Endothelial cell of umbilical vein (primary cell): ENCODE measurements at regions of chr12 and their contacts with region 1.

Region 1: DNA sequence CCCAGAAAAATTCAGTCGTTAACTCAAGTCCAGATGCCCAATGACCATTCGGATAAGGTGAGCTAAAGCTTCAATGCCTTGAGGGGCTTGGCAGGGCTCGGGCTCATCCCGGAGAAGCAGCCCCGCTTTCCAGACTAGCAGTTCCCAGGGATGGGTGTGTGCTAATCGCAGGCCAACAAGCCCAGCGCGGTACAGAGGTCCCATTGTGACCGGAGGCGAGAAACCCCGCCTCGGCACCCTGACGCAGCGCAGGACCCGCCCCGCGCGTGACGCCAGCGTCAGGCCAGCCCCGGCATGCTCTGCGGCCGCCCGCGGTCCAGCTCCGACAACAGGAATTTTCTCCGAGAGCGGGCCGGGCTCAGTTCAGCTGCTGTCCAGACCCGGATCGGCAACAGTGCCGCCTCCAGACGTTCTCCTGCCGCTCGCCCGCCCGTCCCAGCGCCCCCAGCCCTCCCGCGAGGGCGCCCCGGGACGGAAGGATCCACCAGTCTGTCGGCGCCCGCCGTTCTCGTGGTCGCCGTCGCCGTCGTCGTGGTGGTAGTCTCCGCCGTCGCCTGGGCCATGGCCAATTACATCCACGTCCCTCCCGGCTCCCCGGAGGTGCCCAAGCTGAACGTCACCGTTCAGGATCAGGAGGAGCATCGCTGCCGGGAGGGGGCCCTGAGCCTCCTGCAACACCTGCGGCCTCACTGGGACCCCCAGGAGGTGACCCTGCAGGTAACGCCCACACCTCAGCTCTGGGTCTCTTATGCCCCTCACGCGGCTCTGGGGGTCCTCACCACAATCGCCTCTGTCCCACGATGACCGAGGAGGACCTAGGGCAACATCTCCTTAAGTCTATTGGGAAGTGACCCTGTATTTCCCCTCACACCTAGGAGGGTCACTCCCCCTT is at the start of gene ETNK1:
- DNase-seq: peak; percentile 94
- H3K4me3 ChIP-seq: peak within 1 kb of the TSS; percentile 81 to 96 (median 92)
- H3K27ac ChIP-seq: peak within 1 kb of the TSS; percentile 72
- H3K4me1 ChIP-seq: peaks cover 29% of the 10 kb centered on the region
- H3K27me3 ChIP-seq: peaks cover under 1 to 2% of the 10 kb centered on the region in 2 experiments
- CTCF ChIP-seq: no peak
- POLR2A ChIP-seq: peak; percentile 92
- total RNA-seq, gene ETNK1: 63.8 and 68.4 TPM in 2 replicates

Region 2: GRCh38 chr12:22046090-22046967 is 578.8 kb before region 1 on chr12 and contains the start of gene CMAS:
- CTCF ChIA-PET with region 1: no interaction called
- POLR2A ChIA-PET with region 1: no interaction called
- dilution Hi-C with region 1: no loop called
- intact Hi-C with region 1: loop called (anchors 10 kb)
- DNase-seq: peak; percentile 56
- H3K4me3 ChIP-seq: peak within 1 kb of the TSS; percentile 90 to 92 (median 92)
- H3K27ac ChIP-seq: peak within 1 kb of the TSS; percentile 69
- H3K4me1 ChIP-seq: peaks cover 12% of the 10 kb centered on the region
- H3K27me3 ChIP-seq: no peaks in the 10 kb centered on the region
- CTCF ChIP-seq: no peak
- POLR2A ChIP-seq: peak; percentile 73
- total RNA-seq, gene CMAS: 34.4 and 35.4 TPM in 2 replicates

Region 3: DNA sequence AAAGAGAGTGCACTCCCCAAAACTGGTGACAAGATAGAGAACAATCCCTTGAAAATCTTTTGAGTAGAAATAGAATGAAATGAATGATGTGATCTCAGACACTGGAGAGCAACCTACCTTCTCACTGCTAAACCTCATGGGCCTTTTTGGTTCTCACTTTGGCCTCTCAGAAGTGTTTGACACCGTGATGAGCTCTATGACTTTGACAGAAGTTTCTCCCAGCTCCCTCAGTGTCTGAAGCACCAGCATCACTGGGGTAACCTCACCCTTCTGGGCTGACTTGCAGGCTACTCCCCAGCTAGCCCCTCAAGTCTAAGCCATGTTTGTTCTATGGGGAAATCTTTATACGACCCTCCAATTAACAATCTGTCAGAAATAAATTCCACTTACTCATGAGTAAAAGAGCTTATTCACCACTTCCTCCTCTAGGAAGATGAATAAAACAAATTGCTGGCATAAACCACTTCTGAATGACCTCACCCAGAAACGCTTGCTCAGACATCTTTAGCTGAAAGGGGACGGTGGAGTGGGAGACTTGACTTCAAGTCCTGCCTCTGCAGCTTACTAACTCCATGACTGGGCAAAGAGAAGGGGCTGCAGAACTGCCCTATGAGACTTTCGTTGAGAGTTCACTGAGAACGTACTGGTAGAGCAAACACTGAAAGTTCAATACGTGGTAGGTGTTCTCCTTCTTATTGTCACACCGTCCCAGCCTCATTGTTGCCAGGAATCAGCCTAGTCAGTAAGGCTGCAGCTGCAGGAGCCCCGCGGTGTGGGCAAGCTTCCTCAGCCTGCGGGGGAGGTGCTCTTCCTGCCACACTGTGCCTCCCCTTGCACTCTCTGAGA is 337.1 kb before region 1 on chr12:
- CTCF ChIA-PET with region 1: no interaction called
- POLR2A ChIA-PET with region 1: no interaction called
- dilution Hi-C with region 1: no loop called
- intact Hi-C with region 1: loop called (anchors 5 kb)
- DNase-seq: peak; percentile 60
- H3K4me3 ChIP-seq: no peak overlapping the region
- H3K27ac ChIP-seq: no peak overlapping the region
- H3K4me1 ChIP-seq: peaks cover 21% of the 10 kb centered on the region
- H3K27me3 ChIP-seq: no peaks in the 10 kb centered on the region
- CTCF ChIP-seq: no peak
- POLR2A ChIP-seq: no peak

Region 4: GRCh38 chr12:22477166-22477893 is 147.8 kb before region 1 on chr12:
- CTCF ChIA-PET with region 1: no interaction called
- POLR2A ChIA-PET with region 1: no interaction called
- dilution Hi-C with region 1: no loop called
- intact Hi-C with region 1: loop called (anchors 5 kb)
- DNase-seq: peak; percentile 51
- H3K4me3 ChIP-seq: no peak overlapping the region
- H3K27ac ChIP-seq: peak overlapping the region; percentile 34
- H3K4me1 ChIP-seq: peaks cover 11% of the 10 kb centered on the region
- H3K27me3 ChIP-seq: no peaks in the 10 kb centered on the region
- CTCF ChIP-seq: no peak
- POLR2A ChIP-seq: no peak

Region 5: GRCh38 chr12:22529281-22530060 is 95.6 kb before region 1 on chr12:
- CTCF ChIA-PET with region 1: interaction called, 17 read pairs
- POLR2A ChIA-PET with region 1: no interaction called
- dilution Hi-C with region 1: no loop called
- intact Hi-C with region 1: loop called (anchors 2 kb)
- DNase-seq: peak; percentile 36
- H3K4me3 ChIP-seq: no peak overlapping the region
- H3K27ac ChIP-seq: peak overlapping the region; percentile 75
- H3K4me1 ChIP-seq: peaks cover 43% of the 10 kb centered on the region
- H3K27me3 ChIP-seq: no peaks in the 10 kb centered on the region
- CTCF ChIP-seq: peak in 1 of 2 donors; percentile 15
- POLR2A ChIP-seq: no peak

Region 6: GRCh38 chr12:22598141-22598762 is 26.9 kb before region 1 on chr12:
- CTCF ChIA-PET with region 1: no interaction called
- POLR2A ChIA-PET with region 1: no interaction called
- dilution Hi-C with region 1: no loop called
- intact Hi-C with region 1: no loop called
- DNase-seq: no peak
- H3K4me3 ChIP-seq: no peak overlapping the region
- H3K27ac ChIP-seq: no peak overlapping the region
- H3K4me1 ChIP-seq: no peaks in the 10 kb centered on the region
- H3K27me3 ChIP-seq: no peaks in the 10 kb centered on the region
- CTCF ChIP-seq: no peak
- POLR2A ChIP-seq: no peak